A673 (cell line): ENCODE measurements at regions of chr3 and their contacts with region 1.

Region 1: GRCh38 chr3:185733980-185734724 is 90.7 kb downstream of the IGF2BP2 start:
- DNase-seq: peak; percentile 80
- H3K4me3 ChIP-seq: no peak overlapping the region
- H3K27ac ChIP-seq: peak overlapping the region; percentile 43
- H3K4me1 ChIP-seq: peaks cover 44% of the 10 kb centered on the region
- H3K27me3 ChIP-seq: no peaks in the 10 kb centered on the region
- CTCF ChIP-seq: peak; percentile 67

Region 2: DNA sequence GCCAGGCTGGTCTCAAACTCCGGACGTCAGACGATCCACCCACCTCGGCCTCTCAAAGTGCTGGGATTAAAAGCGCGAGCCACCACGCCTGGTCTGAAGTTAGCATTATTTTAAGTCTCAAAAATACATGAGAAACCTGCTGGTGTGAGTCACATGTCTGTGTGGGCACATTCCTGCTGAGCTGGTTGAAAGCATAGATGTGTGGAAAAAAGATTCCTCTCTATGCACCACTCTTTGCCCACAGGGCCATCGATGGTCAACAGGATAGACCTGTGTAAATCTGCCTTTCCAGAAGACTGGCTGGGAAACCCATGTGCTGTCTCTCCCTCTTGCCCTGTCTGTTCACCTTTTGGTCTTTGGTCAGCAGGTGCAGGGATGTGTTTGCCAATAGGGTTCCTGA is 1290.8 kb before region 1 on chr3:
- CTCF ChIA-PET with region 1: no interaction called
- POLR2A ChIA-PET with region 1: no interaction called
- intact Hi-C with region 1: no loop called
- DNase-seq: no peak
- H3K4me3 ChIP-seq: no peak overlapping the region
- H3K27ac ChIP-seq: no peak overlapping the region
- H3K4me1 ChIP-seq: no peaks in the 10 kb centered on the region
- H3K27me3 ChIP-seq: peaks cover 3% of the 10 kb centered on the region
- CTCF ChIP-seq: no peak

Region 3: DNA sequence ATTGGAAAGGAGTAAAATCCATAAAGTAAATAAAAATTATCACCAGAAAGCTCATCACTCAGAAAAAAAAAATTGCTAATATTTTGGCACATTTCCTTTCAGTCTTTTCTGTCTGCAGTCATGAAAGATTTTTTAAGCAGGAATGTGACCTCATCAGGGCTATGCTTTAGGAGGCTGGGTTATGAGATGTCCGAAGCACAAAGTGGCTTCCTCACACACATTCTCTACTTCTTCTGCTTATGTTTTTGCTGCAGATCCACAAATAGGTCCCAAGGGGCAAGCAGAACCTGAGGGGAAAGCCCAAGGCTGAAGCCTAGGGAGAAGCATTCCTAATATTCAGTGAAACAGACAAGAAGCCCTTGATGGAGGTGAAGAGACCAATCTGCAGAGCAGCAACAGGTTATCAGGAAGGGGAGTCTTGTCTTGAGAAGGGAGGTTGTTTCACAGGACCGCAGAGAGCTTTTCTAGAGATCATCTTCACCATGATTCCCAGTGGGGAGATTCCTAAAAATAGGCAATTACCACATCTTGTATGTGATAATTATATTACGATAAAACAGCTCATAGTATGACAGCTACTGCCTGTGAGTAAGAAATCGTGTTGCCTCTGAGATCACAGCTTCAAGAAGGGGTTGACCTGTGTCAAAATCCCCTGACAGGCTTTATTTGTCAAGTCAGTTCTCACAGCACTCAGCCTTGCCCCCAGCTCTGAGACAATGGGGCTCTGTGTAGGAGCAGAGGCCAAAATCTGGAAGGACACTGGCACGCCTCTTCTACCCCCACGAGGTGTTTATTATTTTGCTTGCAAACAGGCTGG is 30.2 kb after region 1 on chr3:
- CTCF ChIA-PET with region 1: interaction called, 8 read pairs
- POLR2A ChIA-PET with region 1: no interaction called
- intact Hi-C with region 1: loop called (anchors 5 kb)
- DNase-seq: no peak
- H3K4me3 ChIP-seq: no peak overlapping the region
- H3K27ac ChIP-seq: no peak overlapping the region
- H3K4me1 ChIP-seq: peaks cover 64% of the 10 kb centered on the region
- H3K27me3 ChIP-seq: no peaks in the 10 kb centered on the region
- CTCF ChIP-seq: no peak

Region 4: DNA sequence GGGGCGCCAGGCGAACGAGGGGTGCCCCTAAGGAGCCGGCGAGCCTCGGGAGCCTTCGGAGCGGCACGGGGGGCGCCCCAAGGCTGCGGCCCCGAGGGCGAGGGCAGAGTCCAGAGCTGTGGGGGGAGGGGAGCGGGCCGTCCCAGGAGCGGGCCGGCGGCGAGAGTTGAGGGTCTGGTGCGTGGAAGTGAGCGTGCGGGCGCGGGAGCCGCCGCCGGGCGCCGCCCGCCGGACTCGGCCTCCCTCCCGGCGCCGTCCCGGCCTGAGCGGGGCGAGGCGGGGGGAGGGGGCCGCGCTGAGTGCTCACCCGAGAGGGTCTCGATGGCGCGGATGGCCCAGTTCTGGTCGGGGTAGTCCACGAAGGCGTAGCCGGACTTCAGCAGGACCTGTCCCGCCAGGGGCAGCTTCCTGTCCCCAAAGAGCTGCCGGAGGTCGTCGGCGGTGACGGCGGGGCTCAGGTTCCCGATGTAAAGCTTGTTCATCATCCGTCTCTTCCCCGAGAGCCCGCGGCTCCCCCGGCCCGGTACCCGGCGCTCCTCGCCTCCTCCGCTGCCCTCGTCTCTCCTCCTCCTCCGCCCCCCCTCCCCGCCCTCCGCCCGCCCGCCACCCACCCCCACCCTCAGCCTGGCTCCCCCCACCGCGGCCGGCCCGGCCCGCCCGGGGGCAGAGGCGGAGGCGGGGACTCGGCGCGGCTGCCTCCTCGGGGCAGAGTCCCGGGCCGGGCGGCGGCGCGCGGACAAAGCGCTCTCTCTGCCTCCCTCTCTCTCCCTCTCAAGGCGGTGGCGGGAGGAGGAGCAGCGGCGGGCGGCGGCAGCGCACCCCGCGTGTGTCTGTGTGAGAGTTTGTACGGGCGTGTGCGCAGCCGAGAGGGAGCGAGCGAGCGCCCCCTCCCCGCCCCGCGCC is 90.6 kb after region 1 on chr3 and contains the start of gene IGF2BP2:
- CTCF ChIA-PET with region 1: interaction called, 5 read pairs
- POLR2A ChIA-PET with region 1: no interaction called
- intact Hi-C with region 1: loop called (anchors 1 kb)
- DNase-seq: peak; percentile 89
- H3K4me3 ChIP-seq: peak within 1 kb of the TSS; percentile 97
- H3K27ac ChIP-seq: peak within 1 kb of the TSS; percentile 97
- H3K4me1 ChIP-seq: peaks cover 25% of the 10 kb centered on the region
- H3K27me3 ChIP-seq: no peaks in the 10 kb centered on the region
- CTCF ChIP-seq: no peak
- total RNA-seq, gene IGF2BP2: 66.2 and 77.2 TPM in 2 replicates

Region 5: GRCh38 chr3:185912929-185913901 is 179.1 kb after region 1 on chr3:
- CTCF ChIA-PET with region 1: no interaction called
- POLR2A ChIA-PET with region 1: no interaction called
- intact Hi-C with region 1: loop called (anchors 5 kb)
- DNase-seq: no peak
- H3K4me3 ChIP-seq: no peak overlapping the region
- H3K27ac ChIP-seq: no peak overlapping the region
- H3K4me1 ChIP-seq: no peaks in the 10 kb centered on the region
- H3K27me3 ChIP-seq: no peaks in the 10 kb centered on the region
- CTCF ChIP-seq: no peak

Region 6: GRCh38 chr3:186783073-186783730 is 1049.0 kb after region 1 on chr3 and contains the start of gene EIF4A2:
- CTCF ChIA-PET with region 1: no interaction called
- POLR2A ChIA-PET with region 1: interaction called, 11 read pairs
- intact Hi-C with region 1: no loop called
- DNase-seq: peak; percentile 95
- H3K4me3 ChIP-seq: peak within 1 kb of the TSS; percentile 77
- H3K27ac ChIP-seq: peak within 1 kb of the TSS; percentile 98
- H3K4me1 ChIP-seq: peaks cover 21% of the 10 kb centered on the region
- H3K27me3 ChIP-seq: no peaks in the 10 kb centered on the region
- CTCF ChIP-seq: no peak
- total RNA-seq, gene EIF4A2: 403 and 435 TPM in 2 replicates